Uterus (tissue), 4 donors: ENCODE measurements at regions of chr1 and their contacts with region 1.

Region 1: DNA sequence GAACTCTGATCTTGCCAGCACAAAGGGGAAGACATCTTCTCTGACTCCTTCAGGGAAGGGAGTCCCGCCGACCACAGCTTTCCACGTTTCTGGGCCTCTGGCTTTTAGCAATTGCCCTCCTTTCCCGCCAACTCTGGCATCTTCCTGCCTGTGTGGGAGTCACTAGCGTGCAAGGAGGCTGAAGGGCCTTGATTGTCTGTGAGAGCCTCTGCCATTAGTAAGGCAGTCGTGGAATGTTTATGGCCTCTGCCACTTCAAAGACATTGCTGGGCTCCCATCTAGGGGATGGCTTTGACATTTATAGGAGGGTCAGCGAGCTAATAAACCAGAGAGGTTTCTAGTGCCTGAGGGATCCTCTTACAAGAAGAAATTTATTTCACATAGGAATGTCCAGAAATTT is 14.3 kb upstream of the PROK1 start:
- DNase-seq: no peak
- H3K4me3 ChIP-seq: no peak overlapping the region
- H3K27ac ChIP-seq: no peak overlapping the region
- H3K4me1 ChIP-seq: no peaks in the 10 kb centered on the region
- H3K27me3 ChIP-seq: no peaks in the 10 kb centered on the region
- CTCF ChIP-seq: no peak
- POLR2A ChIP-seq: no peak

Region 2: DNA sequence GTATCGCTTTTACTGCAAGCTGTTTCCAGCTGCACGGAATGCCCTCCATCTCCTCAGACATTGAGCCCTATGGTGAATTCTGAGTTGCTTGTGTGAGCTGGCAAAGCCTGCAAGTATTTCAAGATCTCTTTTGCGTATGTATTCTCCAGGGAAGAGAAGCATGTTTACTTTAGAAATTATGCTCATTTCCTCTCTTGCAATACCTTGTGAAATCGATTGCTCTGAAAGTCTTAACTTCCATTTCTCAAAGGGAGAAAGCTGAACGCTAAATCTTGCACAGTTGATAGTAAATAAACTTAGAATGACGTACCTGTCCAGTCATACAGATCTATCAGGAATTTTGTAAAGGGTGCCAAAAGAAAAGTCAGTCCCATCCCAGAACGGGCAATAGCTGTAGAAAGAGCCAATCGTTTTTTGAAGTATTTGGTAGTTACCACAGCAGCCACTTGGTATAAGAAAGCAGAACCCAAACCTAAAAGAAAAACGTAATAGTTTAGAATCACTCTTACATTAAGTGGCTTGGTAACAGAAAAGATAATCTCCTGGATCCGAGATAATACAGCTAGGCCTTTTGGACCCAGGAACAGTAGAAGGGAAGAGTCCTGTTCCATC is 55.9 kb before region 1 on chr1:
- intact Hi-C with region 1: loop called (anchors 2 kb)
- DNase-seq: no peak
- H3K4me3 ChIP-seq: no peak overlapping the region
- H3K27ac ChIP-seq: no peak overlapping the region
- H3K4me1 ChIP-seq: no peaks in the 10 kb centered on the region
- H3K27me3 ChIP-seq: no peaks in the 10 kb centered on the region
- CTCF ChIP-seq: no peak
- POLR2A ChIP-seq: no peak